ENCODE measurements at regions of chr12 and their contacts with region 1.

Region 1: GRCh38 chr12:546921-547845 is 87.4 kb downstream of the B4GALNT3 start:
- DNase-seq: peak; percentile 52 to 55
- H3K4me3 ChIP-seq: no peak overlapping the region
- H3K27ac ChIP-seq: no peak overlapping the region
- H3K4me1 ChIP-seq: peaks cover 0 to 4% of the 10 kb centered on the region in 2 donors
- H3K27me3 ChIP-seq: no peaks in the 10 kb centered on the region
- CTCF ChIP-seq: peak; percentile 98 to 100 (median 98)
- POLR2A ChIP-seq: no peak

Region 2: DNA sequence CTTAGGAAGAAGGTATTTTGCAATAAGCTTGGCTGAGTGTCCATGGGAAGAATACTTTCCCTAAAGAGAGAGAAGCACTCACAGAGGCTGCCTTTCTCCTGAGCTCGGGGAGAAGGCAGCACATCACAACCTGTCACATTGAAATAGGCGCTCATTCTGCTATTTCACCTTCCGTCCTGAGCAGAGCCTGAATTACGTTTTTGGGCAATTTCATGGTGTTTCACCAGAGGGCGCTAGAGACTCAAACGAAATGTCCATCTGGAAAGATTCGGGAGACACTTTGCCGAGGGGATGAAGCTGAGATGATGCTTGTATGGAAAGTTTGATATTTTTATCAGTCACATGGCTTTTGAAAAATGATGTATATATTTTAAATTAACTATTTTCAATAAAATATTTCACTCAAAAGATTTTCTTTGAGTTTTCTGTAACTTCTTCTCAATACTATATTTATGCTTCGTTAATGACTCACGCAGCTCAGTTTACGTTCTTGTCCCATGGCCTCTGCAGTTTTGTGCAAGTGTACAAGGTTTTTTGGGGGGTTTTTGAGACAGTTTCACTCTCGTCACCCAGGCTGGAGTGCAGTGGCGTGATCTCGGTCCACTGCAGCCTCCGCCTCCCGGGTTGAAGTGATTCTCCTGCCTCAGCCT is 104.8 kb before region 1 on chr12:
- intact Hi-C with region 1: loop called (anchors 5 kb)
- DNase-seq: peak; percentile 50 to 54
- H3K4me3 ChIP-seq: no peak overlapping the region
- H3K27ac ChIP-seq: no peak overlapping the region
- H3K4me1 ChIP-seq: no peaks in the 10 kb centered on the region
- H3K27me3 ChIP-seq: no peaks in the 10 kb centered on the region
- CTCF ChIP-seq: peak; percentile 32 to 84 (median 78)
- POLR2A ChIP-seq: no peak

Measured in thyroid gland (tissue), 4 donors.